Esophagus squamous epithelium (tissue), 5 donors: ENCODE measurements at regions of chr6 and their contacts with region 1.

Region 1: DNA sequence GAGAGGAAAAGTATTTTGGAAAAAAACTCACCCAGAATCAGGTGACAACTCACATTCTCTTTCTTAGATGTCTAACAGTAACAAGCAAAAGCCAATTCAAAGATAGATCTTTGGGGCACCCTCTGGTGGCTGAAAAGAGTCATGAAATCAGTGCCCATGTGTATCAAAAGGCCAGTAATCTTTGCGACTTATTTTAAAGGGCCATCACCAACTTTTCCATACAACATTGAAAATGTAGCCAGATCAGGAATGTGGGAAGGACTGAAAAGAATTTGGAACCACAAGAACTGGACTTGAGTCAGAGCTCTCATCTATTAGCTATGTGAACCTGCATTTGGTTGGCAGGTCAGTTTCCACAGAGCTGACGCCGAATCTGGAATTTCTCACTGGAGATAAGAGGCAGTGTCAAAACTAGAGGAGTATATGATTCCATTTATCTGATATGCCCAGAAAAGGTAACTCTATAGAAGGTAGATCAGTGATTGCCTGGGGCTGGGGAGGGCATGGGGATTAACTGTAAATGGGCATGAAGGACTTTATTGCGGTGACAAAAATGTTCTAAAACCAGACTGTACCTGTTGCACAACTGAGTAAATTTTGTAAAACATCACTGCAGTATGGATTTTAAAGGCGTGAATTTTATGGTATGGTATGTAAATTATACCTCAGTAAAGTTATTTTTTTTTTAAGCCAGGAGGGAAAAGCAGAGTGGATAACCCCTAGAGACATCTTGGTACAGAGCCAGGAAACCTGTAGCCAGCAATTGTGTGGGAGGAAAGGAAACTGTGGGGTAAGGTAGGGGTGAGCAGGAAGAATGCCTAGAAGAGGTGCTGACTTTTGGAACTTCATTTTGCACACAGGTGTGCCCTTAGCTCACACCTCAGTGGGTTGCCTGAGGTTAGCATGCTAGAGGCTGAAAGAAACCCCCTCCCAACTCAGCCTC is 117.1 kb upstream of the ASF1A start:
- DNase-seq: no peak
- H3K4me3 ChIP-seq: no peak overlapping the region
- H3K27ac ChIP-seq: no peak overlapping the region
- H3K4me1 ChIP-seq: peaks cover 0 to 12% (median 7%) of the 10 kb centered on the region in 3 donors
- H3K27me3 ChIP-seq: no peaks in the 10 kb centered on the region
- CTCF ChIP-seq: peak; percentile 42 to 82 (median 74)
- POLR2A ChIP-seq: no peak

Region 2: DNA sequence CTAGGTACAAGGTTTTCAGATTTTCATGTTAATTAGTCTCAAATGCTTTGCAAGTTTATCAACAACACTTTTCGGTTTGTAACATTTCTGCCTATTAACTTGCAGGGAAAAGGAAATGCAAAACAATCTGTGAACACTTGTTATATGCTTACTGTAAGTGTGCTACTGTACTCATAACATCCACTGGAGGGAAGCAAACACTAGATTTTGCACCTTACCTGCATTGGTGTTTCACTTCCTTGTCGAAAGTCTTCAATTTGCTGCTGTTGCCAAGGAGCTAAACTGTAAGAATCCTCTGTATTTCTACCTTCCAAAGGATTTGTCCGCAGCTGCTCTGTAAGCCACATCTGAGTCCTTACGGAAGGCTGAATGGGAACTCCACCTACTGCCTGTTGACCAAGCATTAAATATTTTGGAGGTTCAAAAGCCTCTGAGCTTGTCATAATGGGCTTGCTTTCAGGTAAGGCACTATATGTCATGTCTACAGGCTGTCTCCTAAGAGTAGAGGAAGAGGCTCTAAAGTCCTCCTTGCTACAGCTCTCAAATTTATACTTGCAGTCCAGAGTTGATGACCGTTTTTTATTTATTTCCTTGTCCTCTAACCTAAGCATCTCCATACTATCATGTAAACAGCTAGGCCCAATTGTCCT is 211.4 kb before region 1 on chr6:
- intact Hi-C with region 1: loop called (anchors 10 kb)
- DNase-seq: no peak
- H3K4me3 ChIP-seq: no peak overlapping the region
- H3K27ac ChIP-seq: no peak overlapping the region
- H3K4me1 ChIP-seq: no peaks in the 10 kb centered on the region
- H3K27me3 ChIP-seq: no peaks in the 10 kb centered on the region
- CTCF ChIP-seq: peak in 5 of 6 experiments; percentile 27 to 63 (median 54)
- POLR2A ChIP-seq: no peak

Region 3: DNA sequence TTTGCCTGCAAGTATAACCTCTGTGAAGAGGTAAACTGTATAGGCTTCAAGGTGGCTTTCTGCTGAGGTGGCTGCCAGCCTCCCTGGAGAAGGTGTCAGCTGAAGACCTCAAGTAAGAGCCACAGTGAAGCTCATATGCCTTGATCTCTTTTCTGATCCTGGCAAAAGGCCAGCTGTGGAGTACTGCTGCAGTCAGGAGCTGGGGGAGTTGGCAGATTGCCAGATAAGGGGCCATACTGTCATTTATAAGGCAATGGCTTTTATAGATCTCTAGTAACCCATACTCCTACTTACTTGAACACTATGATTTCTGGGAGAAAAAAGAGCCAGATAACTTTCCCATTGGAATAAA is 116.7 kb before region 1 on chr6:
- intact Hi-C with region 1: no loop called
- DNase-seq: no peak
- H3K4me3 ChIP-seq: no peak overlapping the region
- H3K27ac ChIP-seq: peak overlapping the region in 3 of 4 donors; percentile 3 to 52 (median 38)
- H3K4me1 ChIP-seq: peaks cover 0 to 12% (median 11%) of the 10 kb centered on the region in 3 donors
- H3K27me3 ChIP-seq: no peaks in the 10 kb centered on the region
- CTCF ChIP-seq: no peak
- POLR2A ChIP-seq: no peak

Region 4: GRCh38 chr6:118881440-118882313 is 104.8 kb after region 1 on chr6:
- intact Hi-C with region 1: no loop called
- DNase-seq: no peak
- H3K4me3 ChIP-seq: no peak overlapping the region
- H3K27ac ChIP-seq: no peak overlapping the region
- H3K4me1 ChIP-seq: peaks cover 0 to 10% (median 4%) of the 10 kb centered on the region in 3 donors
- H3K27me3 ChIP-seq: no peaks in the 10 kb centered on the region
- CTCF ChIP-seq: no peak
- POLR2A ChIP-seq: no peak